IMR-90 (cell line): ENCODE measurements at regions of chr10 and their contacts with region 1.

Region 1: DNA sequence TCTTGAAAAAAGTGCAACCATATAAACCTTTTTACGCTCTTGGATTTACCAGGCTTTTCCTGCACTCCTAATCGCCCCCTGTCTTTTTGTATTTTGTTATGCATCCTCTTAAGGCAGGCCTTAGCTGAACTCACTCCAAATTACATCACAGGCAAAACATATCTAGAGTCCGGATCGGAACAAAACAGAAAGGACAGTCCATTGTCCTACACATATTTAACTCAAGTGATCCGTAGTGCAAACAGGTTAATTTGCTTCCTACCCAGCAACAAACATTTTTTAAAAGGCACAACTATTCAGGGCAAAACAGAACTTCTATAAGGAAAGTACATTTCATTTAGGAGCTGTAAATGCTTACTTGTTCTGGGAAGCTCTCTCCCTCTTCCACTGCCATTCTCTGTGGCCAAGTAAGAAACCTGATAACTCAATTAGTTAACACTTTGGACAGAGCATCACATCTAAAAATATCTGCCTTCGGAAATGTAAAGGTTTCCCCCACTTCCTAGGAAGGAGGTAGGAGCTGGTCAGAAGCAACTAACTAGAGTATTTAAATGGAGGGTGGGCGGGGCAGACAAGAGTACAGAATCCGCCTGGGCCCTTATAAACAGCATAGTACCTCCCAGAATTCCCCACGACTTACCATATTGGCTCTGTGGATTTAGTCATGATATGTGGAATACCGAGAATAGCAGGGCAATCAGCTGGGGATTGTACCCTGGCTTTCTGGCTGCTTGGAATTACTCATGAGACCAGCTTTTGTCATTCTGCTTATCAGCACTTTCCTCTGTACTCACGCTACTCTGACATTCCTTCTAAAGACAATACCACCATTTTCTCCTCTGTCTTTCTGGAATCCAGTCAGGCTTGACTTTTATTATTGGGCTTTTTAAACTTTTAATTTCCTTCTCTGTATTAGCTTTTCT is 89.5 kb downstream of the ANK3 start:
- DNase-seq: peak; percentile 52
- ATAC-seq: peak; percentile 49; the same call in 1 of the 2 replicates
- H3K4me3 ChIP-seq: no peak overlapping the region
- H3K27ac ChIP-seq: no peak overlapping the region
- H3K4me1 ChIP-seq: peaks cover 6% of the 10 kb centered on the region
- H3K27me3 ChIP-seq: no peaks in the 10 kb centered on the region
- CTCF ChIP-seq: no peak
- POLR2A ChIP-seq: no peak
- RAD21 ChIP-seq: no peak

Region 2: GRCh38 chr10:58981846-58982245 is 1318.4 kb before region 1 on chr10:
- CTCF ChIA-PET with region 1: no interaction called
- POLR2A ChIA-PET with region 1: interaction called, 10 read pairs
- dilution Hi-C with region 1: no loop called
- in situ Hi-C with region 1: no loop called
- intact Hi-C with region 1: no loop called
- DNase-seq: no peak
- ATAC-seq: no peak
- H3K4me3 ChIP-seq: no peak overlapping the region
- H3K27ac ChIP-seq: no peak overlapping the region
- H3K4me1 ChIP-seq: no peaks in the 10 kb centered on the region
- H3K27me3 ChIP-seq: peaks cover 5% of the 10 kb centered on the region
- CTCF ChIP-seq: no peak
- POLR2A ChIP-seq: no peak
- RAD21 ChIP-seq: no peak

Region 3: DNA sequence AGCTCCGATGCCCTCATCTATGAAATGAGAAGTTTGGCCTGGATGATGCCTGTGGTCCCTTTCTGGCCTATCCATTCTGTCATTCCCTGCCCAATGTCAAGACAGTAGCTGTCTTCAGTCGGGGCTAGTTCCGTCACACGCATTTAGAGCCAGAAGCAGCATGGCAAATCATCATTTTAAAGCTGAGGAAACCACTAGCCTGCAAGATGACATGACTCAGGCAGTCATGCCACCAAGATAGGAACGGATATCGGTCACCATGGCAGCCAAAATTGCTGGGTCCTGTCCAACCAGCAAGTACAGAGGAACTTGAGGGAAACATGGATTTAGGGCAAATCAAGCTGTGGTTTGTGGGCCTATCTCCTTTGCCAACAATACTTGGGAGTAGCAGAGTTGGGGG is 482.4 kb before region 1 on chr10:
- CTCF ChIA-PET with region 1: no interaction called
- POLR2A ChIA-PET with region 1: no interaction called
- dilution Hi-C with region 1: no loop called
- in situ Hi-C with region 1: no loop called
- intact Hi-C with region 1: no loop called
- DNase-seq: no peak
- ATAC-seq: no peak
- H3K4me3 ChIP-seq: no peak overlapping the region
- H3K27ac ChIP-seq: no peak overlapping the region
- H3K4me1 ChIP-seq: peaks cover 1% of the 10 kb centered on the region; the same call in 1 of the 2 replicates
- H3K27me3 ChIP-seq: no peaks in the 10 kb centered on the region
- CTCF ChIP-seq: no peak
- POLR2A ChIP-seq: no peak
- RAD21 ChIP-seq: no peak

Region 4: GRCh38 chr10:60271319-60272040 is 28.7 kb before region 1 on chr10:
- CTCF ChIA-PET with region 1: no interaction called
- POLR2A ChIA-PET with region 1: no interaction called
- dilution Hi-C with region 1: no loop called
- in situ Hi-C with region 1: no loop called
- intact Hi-C with region 1: no loop called
- DNase-seq: no peak
- ATAC-seq: no peak
- H3K4me3 ChIP-seq: no peak overlapping the region
- H3K27ac ChIP-seq: no peak overlapping the region
- H3K4me1 ChIP-seq: no peaks in the 10 kb centered on the region
- H3K27me3 ChIP-seq: no peaks in the 10 kb centered on the region; the same call in 1 of the 2 replicates
- CTCF ChIP-seq: no peak
- POLR2A ChIP-seq: no peak
- RAD21 ChIP-seq: no peak